ENCODE measurements at regions of chr15 and their contacts with region 1.

Region 1: DNA sequence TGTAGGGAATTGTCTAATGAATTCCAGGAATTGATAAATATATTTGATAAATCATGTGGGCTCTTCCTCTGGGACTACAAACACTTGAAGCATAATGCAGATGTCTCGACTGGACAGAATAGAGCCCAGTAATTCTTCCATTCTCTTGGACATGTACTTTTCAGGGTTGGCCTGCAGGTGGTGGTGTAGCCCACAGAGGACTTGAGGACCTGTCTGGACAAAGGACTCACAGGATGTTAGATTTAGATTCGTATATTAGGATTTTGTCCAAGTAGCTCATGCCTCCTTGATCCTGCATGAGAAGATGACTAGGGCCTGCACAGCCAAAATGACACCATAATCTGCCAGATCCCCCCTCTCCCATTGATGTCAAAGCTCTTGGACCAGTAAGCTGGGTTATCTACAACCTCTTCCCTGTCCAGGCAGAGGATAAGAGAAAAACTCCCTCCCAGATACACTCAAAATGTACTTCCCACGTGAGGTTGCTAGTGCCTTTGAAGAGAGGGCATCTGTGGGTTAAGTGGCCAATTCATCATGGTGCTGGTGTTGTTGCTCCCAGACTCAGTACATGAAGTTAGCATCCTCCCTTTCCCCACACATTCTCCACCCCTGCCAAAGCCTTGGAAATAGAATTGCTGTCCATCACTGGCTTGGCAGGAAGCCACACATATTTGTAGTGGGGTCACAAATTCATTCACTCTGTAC is 88.6 kb upstream of the ZNF280D start:
- DNase-seq: peak; percentile 35 to 71 (median 55)
- ATAC-seq: peak; percentile 97
- H3K4me3 ChIP-seq: no peak overlapping the region
- H3K27ac ChIP-seq: no peak overlapping the region
- H3K4me1 ChIP-seq: no peaks in the 10 kb centered on the region; a peak in 1 of 5 replicates
- H3K27me3 ChIP-seq: no peaks in the 10 kb centered on the region; a peak in 1 of 5 replicates
- CTCF ChIP-seq: peak; percentile 71 to 82 (median 78)
- EP300 ChIP-seq: no peak
- POLR2A ChIP-seq: no peak
- RAD21 ChIP-seq: peak; percentile 85 to 90

Region 2: GRCh38 chr15:56491110-56491722 is 330.7 kb before region 1 on chr15:
- CTCF ChIA-PET with region 1: interaction called, 6 read pairs
- POLR2A ChIA-PET with region 1: no interaction called
- in situ Hi-C with region 1: loop called (anchors 25 kb)
- intact Hi-C with region 1: loop called (anchors 5 kb)
- DNase-seq: peak; percentile 52 to 74 (median 65)
- ATAC-seq: peak; percentile 95
- H3K4me3 ChIP-seq: no peak overlapping the region
- H3K27ac ChIP-seq: no peak overlapping the region
- H3K4me1 ChIP-seq: no peaks in the 10 kb centered on the region; a peak in 1 of 5 replicates
- H3K27me3 ChIP-seq: no peaks in the 10 kb centered on the region
- CTCF ChIP-seq: peak; percentile 81 to 90 (median 89)
- EP300 ChIP-seq: no peak
- POLR2A ChIP-seq: no peak
- RAD21 ChIP-seq: peak; percentile 73 to 87

Region 3: DNA sequence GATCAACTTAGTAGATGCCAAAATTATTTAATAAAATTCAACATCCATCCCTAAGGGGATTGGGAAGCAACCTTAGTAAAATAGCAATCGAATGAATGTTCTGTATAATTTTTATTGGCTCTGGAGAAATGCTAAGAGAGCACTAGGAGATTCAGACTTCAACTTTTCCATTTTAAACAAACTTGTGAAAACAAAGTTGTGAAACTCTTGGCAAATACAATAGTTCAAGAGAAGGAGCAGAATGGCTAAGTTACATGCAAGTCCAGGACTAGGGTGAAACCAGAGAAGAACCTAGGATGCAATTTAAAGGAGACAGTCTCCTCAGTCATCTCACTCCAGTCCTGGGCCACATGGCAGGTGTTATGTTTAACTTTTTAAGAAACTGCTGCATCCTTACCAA is 71.9 kb before region 1 on chr15:
- CTCF ChIA-PET with region 1: no interaction called
- POLR2A ChIA-PET with region 1: no interaction called
- in situ Hi-C with region 1: no loop called
- intact Hi-C with region 1: no loop called
- DNase-seq: no peak
- ATAC-seq: no peak
- H3K4me3 ChIP-seq: no peak overlapping the region
- H3K27ac ChIP-seq: no peak overlapping the region
- H3K4me1 ChIP-seq: no peaks in the 10 kb centered on the region
- H3K27me3 ChIP-seq: no peaks in the 10 kb centered on the region
- CTCF ChIP-seq: no peak
- EP300 ChIP-seq: no peak
- POLR2A ChIP-seq: no peak
- RAD21 ChIP-seq: no peak

Region 4: GRCh38 chr15:56869573-56869972 is 47.7 kb after region 1 on chr15:
- CTCF ChIA-PET with region 1: interaction called, 3 read pairs
- POLR2A ChIA-PET with region 1: interaction called, 3 read pairs
- in situ Hi-C with region 1: no loop called
- intact Hi-C with region 1: loop called (anchors 1 kb)
- DNase-seq: peak in 2 of 4 experiments; percentile 23 to 52
- ATAC-seq: peak; percentile 60
- H3K4me3 ChIP-seq: no peak overlapping the region
- H3K27ac ChIP-seq: no peak overlapping the region
- H3K4me1 ChIP-seq: no peaks in the 10 kb centered on the region
- H3K27me3 ChIP-seq: no peaks in the 10 kb centered on the region
- CTCF ChIP-seq: peak; percentile 70 to 77 (median 71)
- EP300 ChIP-seq: no peak
- POLR2A ChIP-seq: no peak
- RAD21 ChIP-seq: peak; percentile 73 to 93

Region 5: DNA sequence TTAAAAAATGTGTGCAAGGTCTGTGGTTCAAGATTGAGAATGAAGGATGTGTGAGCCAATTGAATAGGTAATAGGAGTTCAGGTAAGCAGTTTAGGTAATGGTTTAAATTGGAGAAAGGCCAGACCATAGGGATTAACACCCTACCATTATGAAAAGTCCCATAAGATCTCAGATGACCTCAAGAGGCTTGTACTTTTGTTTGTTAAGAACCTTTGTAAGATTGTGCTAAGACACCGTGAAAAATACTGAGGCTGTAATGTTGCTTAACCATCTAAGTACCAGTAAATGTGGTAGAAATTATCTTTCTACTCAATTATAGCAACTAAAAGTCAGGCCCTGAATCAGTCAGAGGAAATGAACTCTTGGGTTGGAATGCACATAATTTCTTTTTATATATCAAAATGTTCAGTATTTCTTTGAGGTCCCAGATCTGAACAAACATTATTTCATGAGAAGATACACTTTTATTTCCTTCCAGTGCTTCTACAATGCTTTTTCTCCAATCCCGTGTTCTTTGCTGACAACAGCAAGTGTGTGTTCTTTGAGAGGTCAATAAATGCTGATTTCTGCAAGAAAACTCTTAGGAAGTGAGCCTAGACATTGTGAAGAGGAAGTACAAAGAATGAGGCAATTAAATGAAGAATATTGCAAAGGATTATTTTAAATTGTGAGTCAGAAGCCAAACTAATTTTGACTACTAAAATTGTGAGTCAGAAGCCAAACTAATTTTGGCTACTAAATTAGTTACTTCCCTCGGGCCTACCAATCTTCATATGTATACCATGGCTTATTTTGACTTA is 163.0 kb after region 1 on chr15:
- CTCF ChIA-PET with region 1: no interaction called
- POLR2A ChIA-PET with region 1: no interaction called
- in situ Hi-C with region 1: no loop called
- intact Hi-C with region 1: loop called (anchors 10 kb)
- DNase-seq: no peak
- ATAC-seq: no peak
- H3K4me3 ChIP-seq: no peak overlapping the region
- H3K27ac ChIP-seq: no peak overlapping the region
- H3K4me1 ChIP-seq: peaks cover 0 to 17% of the 10 kb centered on the region in 2 experiments; a peak in 3 of 5 replicates
- H3K27me3 ChIP-seq: no peaks in the 10 kb centered on the region
- CTCF ChIP-seq: no peak
- EP300 ChIP-seq: no peak
- POLR2A ChIP-seq: no peak
- RAD21 ChIP-seq: no peak

Region 6: DNA sequence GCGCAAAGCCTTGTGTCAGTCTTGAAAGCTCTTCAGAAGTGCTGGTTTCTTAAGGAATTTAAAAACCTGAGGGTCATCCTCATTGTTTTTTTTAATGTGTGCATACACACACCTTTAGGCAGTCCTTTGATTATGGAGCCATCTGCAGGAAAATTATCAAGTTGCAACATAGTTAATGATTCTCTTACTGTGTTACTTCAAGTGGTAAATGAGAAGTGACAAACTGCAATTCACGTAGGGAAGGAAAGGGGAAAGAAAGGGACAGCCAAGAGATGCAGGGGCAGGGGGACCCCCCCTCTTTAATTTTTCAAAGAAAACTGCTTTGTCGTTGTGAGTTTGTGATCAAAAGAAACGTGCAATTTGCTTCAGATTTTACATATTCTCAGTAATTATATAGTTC is 392.0 kb after region 1 on chr15:
- CTCF ChIA-PET with region 1: interaction called, 4 read pairs
- POLR2A ChIA-PET with region 1: no interaction called
- in situ Hi-C with region 1: no loop called
- intact Hi-C with region 1: loop called (anchors 5 kb)
- DNase-seq: peak in 2 of 4 experiments; percentile 9 to 46
- ATAC-seq: peak; percentile 82
- H3K4me3 ChIP-seq: no peak overlapping the region
- H3K27ac ChIP-seq: no peak overlapping the region
- H3K4me1 ChIP-seq: peaks cover 0 to 8% of the 10 kb centered on the region in 2 experiments; a peak in 2 of 5 replicates
- H3K27me3 ChIP-seq: no peaks in the 10 kb centered on the region
- CTCF ChIP-seq: peak; percentile 34 to 72 (median 58); a peak in 5 of 6 replicates
- EP300 ChIP-seq: no peak
- POLR2A ChIP-seq: no peak
- RAD21 ChIP-seq: peak; percentile 70 to 78

Region 7: GRCh38 chr15:57527382-57528091 is 705.7 kb after region 1 on chr15:
- CTCF ChIA-PET with region 1: no interaction called
- POLR2A ChIA-PET with region 1: no interaction called
- in situ Hi-C with region 1: no loop called
- intact Hi-C with region 1: loop called (anchors 10 kb)
- DNase-seq: peak; percentile 39 to 72 (median 42)
- ATAC-seq: peak; percentile 79
- H3K4me3 ChIP-seq: no peak overlapping the region
- H3K27ac ChIP-seq: no peak overlapping the region
- H3K4me1 ChIP-seq: no peaks in the 10 kb centered on the region
- H3K27me3 ChIP-seq: peaks cover 18 to 31% of the 10 kb centered on the region in 2 experiments; a peak in 3 of 5 replicates
- CTCF ChIP-seq: peak; percentile 43 to 84 (median 57); a peak in 5 of 6 replicates
- EP300 ChIP-seq: no peak
- POLR2A ChIP-seq: no peak
- RAD21 ChIP-seq: peak; percentile 78 to 90

Measured in K562 (cell line).